Gastrocnemius medialis (tissue), 4 donors: ENCODE measurements at regions of chr1 and their contacts with region 1.

Region 1: DNA sequence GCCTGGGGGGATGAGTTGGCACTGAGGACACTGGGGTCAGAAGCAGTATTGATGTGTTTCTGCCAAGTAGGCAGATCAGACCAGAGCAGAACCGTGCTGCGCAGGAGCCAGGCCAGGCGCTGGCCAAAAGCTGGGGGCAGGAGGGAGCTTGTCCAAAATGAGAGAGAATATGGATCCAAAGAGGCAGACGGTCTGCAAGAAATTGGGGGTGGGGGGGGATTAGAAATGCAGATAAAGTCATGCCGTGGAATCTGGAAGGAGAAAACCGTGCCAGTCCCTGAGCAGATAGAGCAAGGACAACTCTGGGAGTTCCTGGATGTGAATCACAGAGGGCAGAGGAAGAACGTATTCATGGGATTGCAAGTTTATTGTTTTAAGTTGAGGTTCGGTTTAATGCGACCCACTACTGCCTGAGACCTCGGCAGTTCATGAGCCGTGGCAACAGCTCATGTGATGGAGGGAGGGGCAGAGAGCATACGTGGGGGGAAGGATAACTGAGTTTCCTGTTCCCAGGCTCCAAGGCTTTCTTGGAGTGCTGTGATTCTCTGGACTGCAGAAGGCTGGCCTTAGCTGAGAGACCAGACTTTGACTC is 224.0 kb downstream of the FGGY start:
- DNase-seq: peak; percentile 4 to 53
- ATAC-seq: peak; percentile 35 to 66
- H3K4me3 ChIP-seq: no peak overlapping the region
- H3K27ac ChIP-seq: peak overlapping the region; percentile 86 to 92 (median 90)
- H3K4me1 ChIP-seq: peaks cover 44 to 56% of the 10 kb centered on the region in 2 donors
- H3K27me3 ChIP-seq: no peaks in the 10 kb centered on the region
- CTCF ChIP-seq: no peak
- POLR2A ChIP-seq: no peak

Region 2: GRCh38 chr1:59076612-59077011 is 444.3 kb before region 1 on chr1:
- in situ Hi-C with region 1: no loop called
- intact Hi-C with region 1: no loop called
- DNase-seq: no peak
- ATAC-seq: peak in 1 of 2 donors; percentile 48
- H3K4me3 ChIP-seq: no peak overlapping the region
- H3K27ac ChIP-seq: no peak overlapping the region
- H3K4me1 ChIP-seq: no peaks in the 10 kb centered on the region
- H3K27me3 ChIP-seq: no peaks in the 10 kb centered on the region
- CTCF ChIP-seq: peak in 1 of 5 experiments; percentile 35
- POLR2A ChIP-seq: no peak

Region 3: DNA sequence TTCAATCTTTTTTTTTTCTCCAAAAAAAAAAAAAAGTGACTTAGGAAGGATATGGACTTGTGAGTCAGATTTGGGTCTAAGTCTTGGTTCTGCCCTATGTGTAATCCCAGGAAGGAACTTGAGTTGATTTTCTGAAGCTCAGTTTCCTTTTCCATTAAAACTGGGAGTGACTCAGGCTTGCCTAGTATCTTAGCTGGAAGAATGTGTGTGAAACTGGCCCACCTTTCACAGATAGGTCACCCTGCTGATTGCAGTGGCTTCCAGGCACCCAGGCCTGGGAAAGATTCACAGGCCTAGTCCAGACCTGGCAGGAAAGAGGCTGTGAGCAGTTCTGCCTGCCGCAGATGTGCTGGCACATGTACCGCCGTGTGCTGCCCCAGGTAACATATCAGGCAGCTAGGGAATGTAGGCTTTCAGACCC is 75.5 kb after region 1 on chr1:
- in situ Hi-C with region 1: no loop called
- intact Hi-C with region 1: loop called (anchors 5 kb)
- DNase-seq: peak in 1 of 2 donors; percentile 59
- ATAC-seq: peak; percentile 8 to 31
- H3K4me3 ChIP-seq: no peak overlapping the region
- H3K27ac ChIP-seq: peak overlapping the region; percentile 84 to 91 (median 86)
- H3K4me1 ChIP-seq: peaks cover 62 to 75% of the 10 kb centered on the region in 2 donors
- H3K27me3 ChIP-seq: no peaks in the 10 kb centered on the region
- CTCF ChIP-seq: no peak
- POLR2A ChIP-seq: no peak

Region 4: DNA sequence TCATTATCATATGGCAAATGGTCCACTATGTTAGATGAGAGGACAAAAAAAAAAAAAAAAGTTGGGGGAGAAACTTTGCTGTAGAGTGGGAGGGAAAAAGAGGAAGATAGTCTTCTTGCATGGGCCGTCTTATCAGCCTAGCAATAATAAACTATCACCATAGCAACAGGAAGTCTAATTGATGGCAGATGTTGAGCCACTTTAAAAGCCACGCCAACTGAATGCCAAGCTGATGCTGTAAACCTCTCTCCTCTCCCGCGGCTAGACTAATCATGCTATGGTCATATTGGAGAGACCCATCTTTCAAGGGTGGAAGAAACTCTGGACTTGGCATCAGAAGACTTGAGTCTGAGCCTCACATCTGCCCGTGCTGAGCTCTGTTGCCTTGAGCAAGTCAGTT is 171.7 kb after region 1 on chr1:
- in situ Hi-C with region 1: loop called in 3 of 4 experiments (anchors 25 kb)
- intact Hi-C with region 1: loop called (anchors 5 kb)
- DNase-seq: no peak
- ATAC-seq: no peak
- H3K4me3 ChIP-seq: no peak overlapping the region
- H3K27ac ChIP-seq: peak overlapping the region; percentile 85 to 89 (median 87)
- H3K4me1 ChIP-seq: peaks cover 60 to 63% of the 10 kb centered on the region in 2 donors
- H3K27me3 ChIP-seq: no peaks in the 10 kb centered on the region
- CTCF ChIP-seq: no peak
- POLR2A ChIP-seq: no peak

Region 5: DNA sequence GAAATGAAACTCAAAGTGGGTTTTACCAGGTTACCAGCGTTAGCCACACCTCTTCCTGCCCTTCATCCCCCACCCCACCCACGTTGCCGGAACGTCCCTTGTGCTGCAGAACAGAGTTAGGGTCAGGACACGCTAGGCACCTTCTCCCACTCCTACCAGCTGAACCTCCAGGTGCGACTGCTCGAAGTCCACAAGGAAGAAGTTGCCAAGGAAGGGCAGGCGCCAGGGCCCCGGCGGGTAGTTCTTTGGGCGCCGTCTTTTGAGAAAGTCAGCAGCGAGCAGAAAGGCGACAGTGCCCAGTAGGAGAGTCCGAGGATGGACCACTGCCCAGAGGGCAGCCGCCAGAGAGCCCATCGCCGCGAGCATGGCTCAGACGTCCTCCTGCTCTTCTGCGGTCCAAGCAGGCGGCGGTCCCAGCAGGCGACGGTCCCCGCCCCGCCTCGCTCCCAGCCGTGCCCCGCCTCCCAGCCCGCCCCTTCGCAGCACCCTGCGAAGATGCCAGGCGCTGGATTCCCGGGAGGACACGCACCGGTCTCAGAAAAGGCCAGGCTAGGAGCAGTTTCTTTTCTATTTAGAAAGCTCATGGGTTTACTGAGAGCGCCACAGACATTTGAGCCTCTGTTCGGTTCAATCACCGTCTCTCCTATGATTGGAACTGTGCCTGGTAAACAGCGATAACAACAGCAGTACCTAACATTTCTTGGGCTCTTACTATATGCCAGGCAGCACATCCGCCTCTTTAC is 405.6 kb after region 1 on chr1 and contains the start of gene CYP2J2:
- in situ Hi-C with region 1: no loop called
- intact Hi-C with region 1: loop called (anchors 10 kb)
- DNase-seq: peak; percentile 15 to 73
- ATAC-seq: peak; percentile 87 to 89
- H3K4me3 ChIP-seq: peak within 1 kb of the TSS; percentile 51 to 72 (median 58)
- H3K27ac ChIP-seq: peak within 1 kb of the TSS; percentile 71 to 84 (median 76)
- H3K4me1 ChIP-seq: peaks cover 0 to 9% of the 10 kb centered on the region in 2 donors
- H3K27me3 ChIP-seq: no peaks in the 10 kb centered on the region
- CTCF ChIP-seq: no peak
- POLR2A ChIP-seq: peak; percentile 40 to 51
- total RNA-seq, gene CYP2J2: 2.4 to 8.7 (median 3.2) TPM